ENCODE measurements at regions of chr11 and their contacts with region 1.

Region 1: DNA sequence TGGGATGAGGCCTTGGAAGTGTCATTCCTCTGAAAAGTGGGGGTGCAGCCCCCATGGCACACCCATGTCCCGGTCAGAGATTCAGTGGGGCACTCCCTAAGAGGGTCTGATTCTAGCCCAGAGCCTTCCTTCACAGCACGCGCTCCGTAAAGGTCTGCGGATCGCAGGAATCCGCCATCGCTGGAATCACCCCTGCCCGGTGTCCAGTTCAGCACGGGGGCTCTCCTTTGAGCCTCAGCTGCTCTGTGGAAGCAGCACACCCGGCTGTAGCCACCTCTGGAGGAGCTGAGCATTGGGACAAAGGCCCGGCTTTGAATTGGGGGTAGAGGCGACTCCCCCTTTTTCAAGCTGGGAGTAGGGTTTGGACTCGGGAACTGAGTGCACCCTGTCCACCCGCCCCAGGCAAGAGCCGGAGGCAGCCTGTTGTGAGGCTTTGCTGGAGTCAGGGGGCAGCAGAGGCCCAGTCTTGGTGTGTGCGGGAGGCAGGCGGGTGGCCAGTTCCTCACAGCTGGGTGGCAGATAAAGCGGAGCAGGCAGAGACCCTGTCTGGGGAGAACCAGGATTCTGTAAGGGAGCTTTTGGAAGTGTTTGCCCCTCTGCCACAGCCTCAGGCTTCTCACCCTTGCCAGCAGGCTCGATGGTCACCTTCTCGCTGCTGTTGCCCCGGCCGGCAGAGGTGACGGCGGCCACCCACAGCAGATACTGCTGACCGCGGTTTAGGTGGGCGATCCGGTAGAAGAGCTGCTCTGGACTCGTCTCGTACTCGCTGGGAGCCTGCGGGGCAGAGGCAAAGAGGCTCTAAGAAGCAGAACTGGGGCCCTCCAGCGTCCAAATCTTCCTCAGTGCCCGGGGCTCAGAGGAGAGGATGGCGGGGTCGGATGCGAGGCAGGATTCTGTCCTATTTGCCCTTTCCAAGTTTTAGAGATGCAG is 115.9 kb downstream of the CEP164 start:
- DNase-seq: peak; percentile 35
- H3K4me3 ChIP-seq: no peak overlapping the region
- H3K27ac ChIP-seq: no peak overlapping the region
- H3K4me1 ChIP-seq: no peaks in the 10 kb centered on the region
- H3K27me3 ChIP-seq: peaks cover 6% of the 10 kb centered on the region
- CTCF ChIP-seq: peak; percentile 24 to 64 (median 48)
- EP300 ChIP-seq: no peak
- POLR2A ChIP-seq: no peak

Region 2: GRCh38 chr11:117807482-117808327 is 364.2 kb after region 1 on chr11:
- in situ Hi-C with region 1: loop called in 3 of 4 experiments (anchors 10 to 25 kb)
- intact Hi-C with region 1: no loop called
- DNase-seq: peak; percentile 84
- H3K4me3 ChIP-seq: no peak overlapping the region
- H3K27ac ChIP-seq: peak overlapping the region in 1 of 4 donors; percentile 71
- H3K4me1 ChIP-seq: peaks cover 0 to 18% (median 11%) of the 10 kb centered on the region in 4 donors
- H3K27me3 ChIP-seq: no peaks in the 10 kb centered on the region
- CTCF ChIP-seq: peak; percentile 91 to 95 (median 93)
- EP300 ChIP-seq: no peak
- POLR2A ChIP-seq: no peak